Activated B cell treated with CpG ODN at 0.5 μM for 24 hours (primary cell): ENCODE measurements at regions of chr4 and their contacts with region 1.

Region 1: DNA sequence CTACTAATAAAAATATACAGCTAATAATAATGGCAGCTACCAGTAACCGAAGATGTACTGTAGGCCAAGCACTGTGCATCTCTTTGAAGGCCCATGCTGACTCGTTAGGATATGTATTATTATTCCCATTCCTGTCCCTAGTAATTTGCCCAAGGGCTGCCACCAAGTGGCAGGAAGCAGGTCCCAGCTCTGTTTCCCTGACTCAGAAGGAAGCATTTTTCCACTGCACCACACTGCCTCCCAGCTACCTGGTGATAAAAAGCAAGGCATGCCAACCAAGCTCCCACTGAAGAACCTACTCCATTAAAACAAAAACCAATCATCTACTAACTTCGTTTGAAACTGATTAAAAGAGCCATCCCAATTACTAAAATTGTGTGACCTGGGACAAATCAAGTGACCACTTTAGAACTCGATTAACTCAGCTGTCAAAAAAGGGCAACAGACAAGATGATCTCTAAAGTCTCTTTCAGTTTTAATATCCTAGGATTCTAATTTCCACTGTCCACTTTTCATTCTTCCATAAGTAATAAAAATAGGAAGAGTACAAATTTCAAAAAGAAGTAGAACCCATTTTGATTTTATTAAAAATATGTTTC is 24.3 kb upstream of the PGM2 start:
- DNase-seq: no peak
- ATAC-seq: no peak
- H3K4me3 Mint-ChIP-seq: no peak overlapping the region
- H3K27ac Mint-ChIP-seq: no peak overlapping the region
- H3K4me1 Mint-ChIP-seq: peaks cover 4% of the 10 kb centered on the region
- H3K27me3 Mint-ChIP-seq: peaks cover 1% of the 10 kb centered on the region
- CTCF ChIP-seq: no peak

Region 2: GRCh38 chr4:38030023-38030422 is 227.9 kb after region 1 on chr4:
- CTCF ChIA-PET with region 1: interaction called, 77 read pairs
- POLR2A ChIA-PET with region 1: interaction called, 5 read pairs
- intact Hi-C with region 1: loop called (anchors 1 kb)
- DNase-seq: no peak
- ATAC-seq: no peak
- H3K4me3 Mint-ChIP-seq: no peak overlapping the region
- H3K27ac Mint-ChIP-seq: no peak overlapping the region
- H3K4me1 Mint-ChIP-seq: peaks cover 3% of the 10 kb centered on the region
- H3K27me3 Mint-ChIP-seq: no peaks in the 10 kb centered on the region
- CTCF ChIP-seq: no peak